ENCODE measurements at regions of chr5 and their contacts with region 1.

Region 1: DNA sequence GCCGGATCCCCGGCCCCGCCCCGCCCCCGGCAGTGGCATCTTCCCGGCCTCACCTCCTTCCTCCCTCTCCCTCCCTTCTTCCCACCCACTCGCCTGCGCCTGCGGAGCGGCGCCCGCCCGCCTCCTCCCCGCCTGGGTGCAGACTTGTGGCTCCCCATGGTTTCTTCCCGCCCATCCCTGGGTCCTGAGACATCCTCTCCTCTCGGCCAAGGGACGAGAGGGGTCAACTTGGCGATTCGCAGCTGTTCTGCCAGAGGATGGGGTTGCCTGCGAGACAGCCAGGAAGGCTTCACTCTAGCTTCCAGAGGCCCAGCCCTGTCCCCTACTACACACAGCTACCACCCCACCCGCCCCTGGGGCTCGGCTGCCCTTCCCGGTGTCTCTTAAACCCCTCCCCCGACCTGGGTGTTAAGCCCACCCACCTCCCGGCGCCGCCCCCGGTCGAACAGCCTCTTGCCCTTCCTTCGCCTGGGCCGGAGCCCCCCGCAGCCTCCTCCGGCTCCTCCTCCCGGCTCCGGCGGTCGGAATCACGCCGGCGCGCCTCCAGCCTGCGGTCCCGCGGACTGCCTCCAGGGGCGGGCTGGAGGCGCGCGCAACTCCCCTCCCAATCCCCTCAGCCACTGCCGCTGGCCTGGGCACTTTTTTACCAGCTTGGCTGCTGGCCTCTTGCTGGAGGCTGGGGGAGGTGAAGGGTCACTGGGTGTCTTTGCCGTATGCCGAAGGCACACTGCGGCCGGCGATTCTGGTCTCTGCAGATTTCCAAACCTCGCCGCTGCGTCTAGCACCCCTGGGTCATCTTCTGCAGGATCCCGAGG is 1.9 kb downstream of the JADE2 start:
- DNase-seq: peak; percentile 43 to 86 (median 60)
- ATAC-seq: peak; percentile 31
- H3K4me3 ChIP-seq: peak overlapping the region; percentile 81
- H3K4me3 Mint-ChIP-seq: peak overlapping the region; percentile 99
- H3K27ac ChIP-seq: peak overlapping the region; percentile 62 to 99
- H3K27ac Mint-ChIP-seq: peak overlapping the region; percentile 100
- H3K4me1 ChIP-seq: peaks cover 64% of the 10 kb centered on the region
- H3K4me1 Mint-ChIP-seq: peaks cover 59% of the 10 kb centered on the region
- H3K27me3 ChIP-seq: no peaks in the 10 kb centered on the region
- H3K27me3 Mint-ChIP-seq: no peaks in the 10 kb centered on the region
- CTCF ChIP-seq: peak; percentile 76

Region 2: GRCh38 chr5:134304311-134304710 is 223.0 kb before region 1 on chr5:
- CTCF ChIA-PET with region 1: no interaction called
- POLR2A ChIA-PET with region 1: no interaction called
- intact Hi-C with region 1: loop called in 1 of 2 experiments (anchors 1 kb)
- DNase-seq: no peak
- ATAC-seq: no peak
- H3K4me3 ChIP-seq: no peak overlapping the region
- H3K4me3 Mint-ChIP-seq: no peak overlapping the region
- H3K27ac ChIP-seq: no peak overlapping the region
- H3K27ac Mint-ChIP-seq: no peak overlapping the region
- H3K4me1 ChIP-seq: peaks cover 3% of the 10 kb centered on the region
- H3K4me1 Mint-ChIP-seq: no peaks in the 10 kb centered on the region
- H3K27me3 ChIP-seq: no peaks in the 10 kb centered on the region
- H3K27me3 Mint-ChIP-seq: no peaks in the 10 kb centered on the region
- CTCF ChIP-seq: no peak

Region 3: DNA sequence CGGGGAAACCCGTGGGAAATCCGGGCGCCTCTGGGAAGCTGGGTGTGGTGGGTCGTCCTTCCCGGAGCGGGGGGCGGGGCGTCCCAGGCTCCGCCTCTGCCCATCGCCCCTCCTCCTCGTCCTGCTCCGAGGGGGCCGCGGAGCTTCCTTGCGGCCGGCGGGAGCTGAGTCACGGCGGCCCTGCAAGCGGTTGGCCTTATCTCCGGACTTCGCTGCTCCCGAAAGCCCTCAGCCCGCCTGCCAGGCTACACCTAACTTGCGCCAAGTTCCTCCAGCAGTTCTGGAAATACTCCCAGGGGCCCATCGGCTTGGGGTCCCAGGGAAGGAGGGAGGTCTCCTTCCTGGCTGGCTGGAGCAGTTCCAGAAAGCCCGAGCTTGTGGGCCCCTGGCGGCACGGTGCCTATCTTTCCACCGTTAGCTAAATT is 61.5 kb before region 1 on chr5:
- CTCF ChIA-PET with region 1: interaction called, 4 read pairs
- POLR2A ChIA-PET with region 1: interaction called, 66 read pairs
- intact Hi-C with region 1: loop called (anchors 2 kb)
- DNase-seq: peak in 11 of 14 experiments; percentile 13 to 76 (median 35)
- ATAC-seq: peak; percentile 59
- H3K4me3 ChIP-seq: peak overlapping the region; percentile 74
- H3K4me3 Mint-ChIP-seq: peak overlapping the region; percentile 85
- H3K27ac ChIP-seq: no peak overlapping the region
- H3K27ac Mint-ChIP-seq: peak overlapping the region; percentile 54
- H3K4me1 ChIP-seq: peaks cover 23% of the 10 kb centered on the region
- H3K4me1 Mint-ChIP-seq: peaks cover 18% of the 10 kb centered on the region
- H3K27me3 ChIP-seq: no peaks in the 10 kb centered on the region
- H3K27me3 Mint-ChIP-seq: no peaks in the 10 kb centered on the region
- CTCF ChIP-seq: no peak

Region 4: GRCh38 chr5:134555890-134556311 is 28.5 kb after region 1 on chr5:
- CTCF ChIA-PET with region 1: interaction called, 22 read pairs
- POLR2A ChIA-PET with region 1: interaction called, 29 read pairs
- intact Hi-C with region 1: loop called in 1 of 2 experiments (anchors 2 kb)
- DNase-seq: peak; percentile 51 to 95 (median 75)
- ATAC-seq: peak; percentile 91
- H3K4me3 ChIP-seq: no peak overlapping the region
- H3K4me3 Mint-ChIP-seq: peak overlapping the region; percentile 80
- H3K27ac ChIP-seq: peak overlapping the region; percentile 77 to 92
- H3K27ac Mint-ChIP-seq: peak overlapping the region; percentile 95
- H3K4me1 ChIP-seq: peaks cover 50% of the 10 kb centered on the region
- H3K4me1 Mint-ChIP-seq: peaks cover 45% of the 10 kb centered on the region
- H3K27me3 ChIP-seq: no peaks in the 10 kb centered on the region
- H3K27me3 Mint-ChIP-seq: no peaks in the 10 kb centered on the region
- CTCF ChIP-seq: no peak

Region 5: DNA sequence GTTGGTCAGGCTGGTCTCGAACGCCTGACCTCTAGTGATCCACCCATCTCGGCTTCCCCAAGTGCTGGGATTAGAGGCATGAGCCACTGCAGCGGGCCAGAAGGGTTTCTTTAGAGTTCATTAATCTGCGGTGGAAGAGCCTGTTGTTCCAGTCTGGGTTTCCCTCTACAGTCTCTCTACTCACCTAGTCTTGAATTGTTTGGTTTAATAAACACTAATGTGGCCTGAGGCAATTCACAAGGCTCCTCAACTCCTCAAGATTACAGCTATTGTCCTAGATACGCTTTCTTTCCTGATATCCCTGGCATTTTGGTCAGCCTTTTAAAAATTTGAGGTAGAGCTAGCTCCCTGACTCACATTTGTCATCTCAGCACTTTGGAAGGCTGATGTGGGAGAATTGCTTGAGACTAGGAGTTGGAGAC is 109.8 kb after region 1 on chr5:
- CTCF ChIA-PET with region 1: no interaction called
- POLR2A ChIA-PET with region 1: no interaction called
- intact Hi-C with region 1: loop called in 1 of 2 experiments (anchors 5 kb)
- DNase-seq: no peak
- ATAC-seq: no peak
- H3K4me3 ChIP-seq: no peak overlapping the region
- H3K4me3 Mint-ChIP-seq: no peak overlapping the region
- H3K27ac ChIP-seq: no peak overlapping the region
- H3K27ac Mint-ChIP-seq: no peak overlapping the region
- H3K4me1 ChIP-seq: peaks cover 8% of the 10 kb centered on the region
- H3K4me1 Mint-ChIP-seq: peaks cover 12% of the 10 kb centered on the region
- H3K27me3 ChIP-seq: no peaks in the 10 kb centered on the region
- H3K27me3 Mint-ChIP-seq: no peaks in the 10 kb centered on the region
- CTCF ChIP-seq: no peak

Region 6: GRCh38 chr5:135386886-135387628 is 859.7 kb after region 1 on chr5:
- CTCF ChIA-PET with region 1: no interaction called
- POLR2A ChIA-PET with region 1: no interaction called
- intact Hi-C with region 1: no loop called
- DNase-seq: peak in 4 of 14 experiments; percentile 12 to 62 (median 40)
- ATAC-seq: peak; percentile 26
- H3K4me3 ChIP-seq: no peak overlapping the region
- H3K4me3 Mint-ChIP-seq: no peak overlapping the region
- H3K27ac ChIP-seq: peak overlapping the region in 1 of 2 donors; percentile 0
- H3K27ac Mint-ChIP-seq: peak overlapping the region; percentile 37
- H3K4me1 ChIP-seq: peaks cover 55% of the 10 kb centered on the region
- H3K4me1 Mint-ChIP-seq: peaks cover 78% of the 10 kb centered on the region
- H3K27me3 ChIP-seq: no peaks in the 10 kb centered on the region
- H3K27me3 Mint-ChIP-seq: no peaks in the 10 kb centered on the region
- CTCF ChIP-seq: no peak